Activated CD8-positive, alpha-beta T cell treated with anti-CD3 and anti-CD28 coated beads, Interleukin-2, amount 10 ng/mL, durations not matched to agents 7 days and 5 days (primary cell): ENCODE measurements at regions of chr6 and their contacts with region 1.

Region 1: GRCh38 chr6:119313937-119314884 is 35.4 kb downstream of the MAN1A1 start:
- DNase-seq: peak; percentile 78
- ATAC-seq: peak; percentile 76
- H3K4me3 Mint-ChIP-seq: peak overlapping the region; percentile 56
- H3K27ac Mint-ChIP-seq: peak overlapping the region; percentile 93
- H3K4me1 Mint-ChIP-seq: peaks cover 77% of the 10 kb centered on the region
- H3K27me3 Mint-ChIP-seq: no peaks in the 10 kb centered on the region

Region 2: GRCh38 chr6:119129148-119129967 is 184.9 kb before region 1 on chr6:
- CTCF ChIA-PET with region 1: interaction called, 12 read pairs
- POLR2A ChIA-PET with region 1: no interaction called
- DNase-seq: peak; percentile 53
- ATAC-seq: peak; percentile 86
- H3K4me3 Mint-ChIP-seq: no peak overlapping the region
- H3K27ac Mint-ChIP-seq: no peak overlapping the region
- H3K4me1 Mint-ChIP-seq: peaks cover 6% of the 10 kb centered on the region
- H3K27me3 Mint-ChIP-seq: peaks cover 10% of the 10 kb centered on the region

Region 3: GRCh38 chr6:119147101-119148053 is 166.8 kb before region 1 on chr6:
- CTCF ChIA-PET with region 1: interaction called, 12 read pairs
- POLR2A ChIA-PET with region 1: interaction called, 8 read pairs
- DNase-seq: peak; percentile 60
- ATAC-seq: peak; percentile 81
- H3K4me3 Mint-ChIP-seq: no peak overlapping the region
- H3K27ac Mint-ChIP-seq: peak overlapping the region; percentile 75
- H3K4me1 Mint-ChIP-seq: peaks cover 50% of the 10 kb centered on the region
- H3K27me3 Mint-ChIP-seq: peaks cover 6% of the 10 kb centered on the region

Region 4: GRCh38 chr6:119303164-119303887 is 10.9 kb before region 1 on chr6:
- CTCF ChIA-PET with region 1: interaction called, 10 read pairs
- POLR2A ChIA-PET with region 1: interaction called, 3 read pairs
- DNase-seq: no peak
- ATAC-seq: no peak
- H3K4me3 Mint-ChIP-seq: no peak overlapping the region
- H3K27ac Mint-ChIP-seq: no peak overlapping the region
- H3K4me1 Mint-ChIP-seq: no peaks in the 10 kb centered on the region
- H3K27me3 Mint-ChIP-seq: no peaks in the 10 kb centered on the region

Region 5: DNA sequence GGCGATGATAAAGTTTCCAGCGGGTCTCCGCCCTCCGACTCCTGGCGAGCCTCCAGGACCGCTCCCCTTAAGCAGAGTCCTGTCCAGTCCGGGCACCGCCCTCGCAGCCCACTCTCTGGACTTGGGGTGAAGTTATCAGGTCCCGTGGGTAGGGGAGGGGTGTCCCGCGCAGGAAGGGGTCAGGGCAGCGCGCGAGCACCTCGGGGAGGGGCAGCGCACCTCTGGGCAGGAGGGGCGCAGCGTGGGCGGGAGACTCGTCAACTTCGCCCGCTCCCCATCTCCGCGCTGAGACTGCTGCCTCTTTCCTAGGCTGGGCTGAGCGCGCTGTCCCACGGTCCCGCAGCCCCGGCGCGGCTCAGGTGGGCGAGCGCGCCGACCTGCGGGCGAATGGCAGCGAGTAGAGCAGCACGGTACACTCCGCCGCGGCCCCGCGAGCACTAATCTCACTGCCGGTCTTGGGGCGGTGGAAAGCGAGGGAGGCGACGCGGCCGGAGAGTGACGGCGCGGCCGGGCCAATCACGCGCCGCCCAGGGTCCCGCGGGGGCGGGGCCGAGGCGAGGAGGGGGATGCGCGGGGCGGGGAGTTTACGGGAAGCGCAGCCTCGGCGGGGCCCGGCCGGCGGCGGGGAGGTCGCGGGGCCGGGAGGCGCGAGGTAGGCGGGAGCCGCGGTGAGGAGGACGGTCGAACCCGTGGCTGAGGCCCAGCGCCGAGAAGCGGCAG is 35.3 kb after region 1 on chr6 and contains the start of gene MAN1A1:
- CTCF ChIA-PET with region 1: interaction called, 22 read pairs
- POLR2A ChIA-PET with region 1: interaction called, 44 read pairs
- DNase-seq: peak; percentile 91
- ATAC-seq: peak; percentile 91
- H3K4me3 Mint-ChIP-seq: peak within 1 kb of the TSS; percentile 76
- H3K27ac Mint-ChIP-seq: peak within 1 kb of the TSS; percentile 82
- H3K4me1 Mint-ChIP-seq: peaks cover 48% of the 10 kb centered on the region
- H3K27me3 Mint-ChIP-seq: no peaks in the 10 kb centered on the region
- total RNA-seq, gene MAN1A1: 13.7 to 13.9 TPM

Region 6: DNA sequence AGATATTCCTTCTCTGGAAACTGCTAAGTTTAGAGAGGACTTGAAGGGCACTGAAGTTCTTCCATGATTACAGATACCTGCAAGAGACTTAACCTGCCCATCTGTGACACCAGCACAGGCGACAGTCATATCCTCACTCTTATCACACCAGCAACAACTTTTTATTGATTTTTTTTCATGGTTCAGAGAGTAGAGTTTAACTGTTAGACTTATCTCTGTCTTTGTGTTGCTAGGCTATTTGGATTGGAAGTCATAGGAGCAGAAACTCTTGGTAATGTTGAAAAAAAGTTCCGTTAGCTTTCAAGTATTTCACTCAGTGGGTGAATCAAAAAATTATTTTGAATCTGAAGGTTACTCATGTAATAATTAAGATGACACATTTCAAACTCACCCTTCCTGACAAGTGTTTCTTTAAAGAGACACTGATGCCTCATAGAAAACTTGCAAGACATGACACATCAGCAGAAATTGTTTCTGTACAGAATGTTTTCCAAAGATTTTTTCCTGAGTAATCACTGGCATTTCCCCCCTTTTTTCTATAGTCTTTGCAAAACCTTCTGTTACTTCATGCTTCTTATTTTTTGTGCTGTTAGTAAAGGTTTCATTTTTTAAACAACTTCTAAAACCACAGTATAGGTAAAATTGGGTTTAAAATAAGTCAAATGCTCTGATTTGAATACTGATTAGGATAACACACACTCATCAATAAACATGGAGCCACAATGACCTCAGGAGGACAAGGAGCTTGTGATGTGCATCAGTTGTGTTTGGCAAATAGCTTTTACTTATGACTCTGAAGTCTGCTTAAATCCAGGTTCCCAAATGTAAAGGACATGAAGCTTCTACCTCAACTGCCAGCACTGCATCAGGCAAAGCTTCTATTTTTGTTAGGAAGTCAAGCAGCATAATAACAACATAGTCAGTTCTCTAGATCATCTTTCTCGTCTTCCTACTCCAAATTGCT is 288.3 kb after region 1 on chr6:
- CTCF ChIA-PET with region 1: no interaction called
- POLR2A ChIA-PET with region 1: no interaction called
- DNase-seq: no peak
- ATAC-seq: no peak
- H3K4me3 Mint-ChIP-seq: no peak overlapping the region
- H3K27ac Mint-ChIP-seq: no peak overlapping the region
- H3K4me1 Mint-ChIP-seq: no peaks in the 10 kb centered on the region
- H3K27me3 Mint-ChIP-seq: peaks cover 2% of the 10 kb centered on the region